ENCODE measurements at regions of chr5 and their contacts with region 1.

Region 1: DNA sequence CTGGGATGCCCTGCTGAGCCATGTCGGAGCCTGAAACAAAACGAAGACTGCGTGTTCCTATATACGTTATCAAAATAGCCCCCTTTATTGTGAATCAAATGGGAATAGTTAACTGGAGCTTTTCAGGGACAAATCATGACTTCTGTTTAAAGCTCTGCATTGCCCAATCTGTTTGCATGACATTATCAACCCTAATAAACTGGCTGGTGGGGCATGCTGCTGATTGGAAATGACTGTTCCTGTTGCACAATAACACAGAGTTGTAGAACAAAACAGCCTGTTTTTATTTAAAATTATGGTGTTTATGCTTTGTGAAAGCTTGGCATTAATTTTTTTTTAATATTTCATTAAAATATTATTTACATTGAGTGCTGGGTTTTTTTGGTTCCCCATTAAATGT is 215.5 kb downstream of the TMEM167A start:
- DNase-seq: no peak
- ATAC-seq: no peak
- H3K4me3 ChIP-seq: no peak overlapping the region
- H3K27ac ChIP-seq: no peak overlapping the region
- H3K4me1 ChIP-seq: no peaks in the 10 kb centered on the region
- H3K27me3 ChIP-seq: peaks cover 3% of the 10 kb centered on the region
- CTCF ChIP-seq: no peak
- POLR2A ChIP-seq: no peak
- RAD21 ChIP-seq: no peak

Region 2: DNA sequence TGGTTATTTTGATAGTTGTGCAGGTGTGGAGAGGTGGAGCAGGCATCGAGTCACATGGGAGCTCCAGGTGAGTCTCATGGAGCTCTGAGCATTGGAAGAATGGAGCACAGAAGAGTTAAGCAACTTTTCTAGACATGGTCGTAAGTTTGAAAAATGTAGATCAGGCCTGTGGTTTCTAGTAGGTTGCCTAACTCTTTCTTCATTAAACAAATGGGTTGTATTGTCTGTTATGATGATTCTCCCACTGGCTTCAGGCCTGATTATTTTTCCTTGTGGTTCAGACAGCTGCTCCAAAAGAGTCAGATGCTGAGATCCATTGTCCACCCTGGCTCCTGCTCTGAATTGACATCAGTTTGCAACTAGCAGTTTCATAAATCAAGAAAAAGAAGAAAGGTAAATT is 503.2 kb before region 1 on chr5:
- CTCF ChIA-PET with region 1: no interaction called
- POLR2A ChIA-PET with region 1: no interaction called
- dilution Hi-C with region 1: no loop called
- in situ Hi-C with region 1: no loop called
- intact Hi-C with region 1: loop called (anchors 2 kb)
- DNase-seq: peak; percentile 84
- ATAC-seq: peak; percentile 27; the same call in 1 of the 2 replicates
- H3K4me3 ChIP-seq: no peak overlapping the region
- H3K27ac ChIP-seq: no peak overlapping the region
- H3K4me1 ChIP-seq: peaks cover 12% of the 10 kb centered on the region
- H3K27me3 ChIP-seq: no peaks in the 10 kb centered on the region
- CTCF ChIP-seq: no peak
- POLR2A ChIP-seq: no peak
- RAD21 ChIP-seq: no peak

Region 3: GRCh38 chr5:82387001-82387818 is 474.5 kb before region 1 on chr5:
- CTCF ChIA-PET with region 1: no interaction called
- POLR2A ChIA-PET with region 1: no interaction called
- dilution Hi-C with region 1: no loop called
- in situ Hi-C with region 1: no loop called
- intact Hi-C with region 1: no loop called
- DNase-seq: peak; percentile 18
- ATAC-seq: no peak
- H3K4me3 ChIP-seq: no peak overlapping the region
- H3K27ac ChIP-seq: no peak overlapping the region; the same call in 1 of the 2 replicates
- H3K4me1 ChIP-seq: peaks cover 14% of the 10 kb centered on the region
- H3K27me3 ChIP-seq: no peaks in the 10 kb centered on the region
- CTCF ChIP-seq: no peak
- POLR2A ChIP-seq: no peak
- RAD21 ChIP-seq: no peak

Measured in IMR-90 (cell line).